CD4-positive, alpha-beta T cell (primary cell): ENCODE measurements at regions of chr14 and their contacts with region 1.

Region 1: DNA sequence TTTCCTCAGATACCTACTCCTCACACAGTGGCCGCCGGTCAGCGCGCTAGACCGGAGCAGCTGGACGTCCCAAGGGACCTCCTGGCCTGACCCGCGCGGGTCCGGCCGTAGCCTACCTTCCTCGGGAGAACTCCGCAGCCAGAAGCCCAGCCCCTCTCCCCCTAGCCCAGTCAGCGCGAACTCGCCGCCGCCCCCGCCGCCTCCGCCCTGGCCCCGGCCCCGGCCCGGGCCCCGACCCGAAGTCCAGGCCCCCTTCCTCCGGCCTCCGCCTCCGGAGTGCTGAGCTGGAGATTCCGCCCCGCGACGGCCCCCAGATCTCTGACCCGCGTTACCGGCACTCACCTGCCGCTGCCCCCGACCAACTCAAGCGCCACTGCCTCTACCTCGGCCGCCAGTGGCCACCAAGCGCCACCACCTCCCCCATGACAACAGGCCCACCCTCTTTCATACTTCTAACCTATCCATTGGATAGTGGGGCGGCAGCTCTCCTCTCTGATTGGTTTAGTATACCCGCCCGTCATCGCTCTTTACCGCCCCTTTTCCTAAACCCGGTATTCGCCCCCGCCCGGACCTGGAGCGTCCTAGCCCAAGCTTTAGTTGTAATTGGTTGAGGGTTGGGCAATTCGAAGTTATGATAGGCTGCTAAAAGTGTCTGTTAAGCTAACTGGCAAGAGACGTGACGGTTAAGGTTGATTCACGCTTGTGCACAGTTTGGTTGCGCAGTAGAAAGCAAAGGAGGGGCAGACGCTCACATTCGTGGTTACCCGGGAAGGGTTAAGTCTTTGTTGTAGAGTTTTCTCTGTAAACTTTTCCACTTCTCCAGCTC is at the start of gene NUMB:
- DNase-seq: peak; percentile 88 to 100 (median 94)
- ATAC-seq: peak; percentile 96
- H3K4me3 ChIP-seq: peak within 1 kb of the TSS; percentile 98
- H3K4me3 Mint-ChIP-seq: peak within 1 kb of the TSS; percentile 97
- H3K27ac ChIP-seq: peak within 1 kb of the TSS; percentile 23 to 37
- H3K27ac Mint-ChIP-seq: peak within 1 kb of the TSS; percentile 84
- H3K4me1 ChIP-seq: peaks cover 21% of the 10 kb centered on the region
- H3K4me1 Mint-ChIP-seq: peaks cover 45% of the 10 kb centered on the region
- H3K27me3 ChIP-seq: no peaks in the 10 kb centered on the region
- H3K27me3 Mint-ChIP-seq: no peaks in the 10 kb centered on the region
- CTCF ChIP-seq: no peak
- total RNA-seq, gene NUMB: 27.9 to 31.5 TPM

Region 2: DNA sequence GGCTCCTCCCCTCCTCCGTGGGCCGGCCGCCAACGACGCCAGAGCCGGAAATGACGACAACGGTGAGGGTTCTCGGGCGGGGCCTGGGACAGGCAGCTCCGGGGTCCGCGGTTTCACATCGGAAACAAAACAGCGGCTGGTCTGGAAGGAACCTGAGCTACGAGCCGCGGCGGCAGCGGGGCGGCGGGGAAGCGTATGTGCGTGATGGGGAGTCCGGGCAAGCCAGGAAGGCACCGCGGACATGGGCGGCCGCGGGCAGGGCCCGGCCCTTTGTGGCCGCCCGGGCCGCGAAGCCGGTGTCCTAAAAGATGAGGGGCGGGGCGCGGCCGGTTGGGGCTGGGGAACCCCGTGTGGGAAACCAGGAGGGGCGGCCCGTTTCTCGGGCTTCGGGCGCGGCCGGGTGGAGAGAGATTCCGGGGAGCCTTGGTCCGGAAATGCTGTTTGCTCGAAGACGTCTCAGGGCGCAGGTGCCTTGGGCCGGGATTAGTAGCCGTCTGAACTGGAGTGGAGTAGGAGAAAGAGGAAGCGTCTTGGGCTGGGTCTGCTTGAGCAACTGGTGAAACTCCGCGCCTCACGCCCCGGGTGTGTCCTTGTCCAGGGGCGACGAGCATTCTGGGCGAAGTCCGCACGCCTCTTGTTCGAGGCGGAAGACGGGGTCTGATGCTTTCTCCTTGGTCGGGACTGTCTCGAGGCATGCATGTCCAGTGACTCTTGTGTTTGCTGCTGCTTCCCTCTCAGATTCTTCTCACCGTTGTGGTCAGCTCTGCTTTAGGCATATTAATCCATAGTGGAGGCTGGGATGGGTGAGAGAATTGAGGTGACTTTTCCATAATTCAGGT is 321.8 kb before region 1 on chr14 and contains the start of gene PSEN1:
- CTCF ChIA-PET with region 1: no interaction called
- POLR2A ChIA-PET with region 1: interaction called, 14 read pairs
- intact Hi-C with region 1: no loop called
- DNase-seq: peak; percentile 97 to 99 (median 99)
- ATAC-seq: peak; percentile 93
- H3K4me3 ChIP-seq: peak within 1 kb of the TSS; percentile 98
- H3K4me3 Mint-ChIP-seq: peak within 1 kb of the TSS; percentile 98
- H3K27ac ChIP-seq: peak within 1 kb of the TSS; percentile 92
- H3K27ac Mint-ChIP-seq: peak within 1 kb of the TSS; percentile 99
- H3K4me1 ChIP-seq: peaks cover 23% of the 10 kb centered on the region
- H3K4me1 Mint-ChIP-seq: peaks cover 31% of the 10 kb centered on the region
- H3K27me3 ChIP-seq: no peaks in the 10 kb centered on the region
- H3K27me3 Mint-ChIP-seq: no peaks in the 10 kb centered on the region
- CTCF ChIP-seq: no peak
- total RNA-seq, gene PSEN1: 27.1 to 28.3 TPM

Region 3: GRCh38 chr14:73422515-73422914 is 35.8 kb before region 1 on chr14:
- CTCF ChIA-PET with region 1: no interaction called
- POLR2A ChIA-PET with region 1: no interaction called
- intact Hi-C with region 1: no loop called
- DNase-seq: no peak
- ATAC-seq: no peak
- H3K4me3 ChIP-seq: no peak overlapping the region
- H3K4me3 Mint-ChIP-seq: no peak overlapping the region
- H3K27ac ChIP-seq: no peak overlapping the region
- H3K27ac Mint-ChIP-seq: no peak overlapping the region
- H3K4me1 ChIP-seq: no peaks in the 10 kb centered on the region
- H3K4me1 Mint-ChIP-seq: peaks cover 20% of the 10 kb centered on the region
- H3K27me3 ChIP-seq: no peaks in the 10 kb centered on the region
- H3K27me3 Mint-ChIP-seq: no peaks in the 10 kb centered on the region
- CTCF ChIP-seq: no peak

Region 4: DNA sequence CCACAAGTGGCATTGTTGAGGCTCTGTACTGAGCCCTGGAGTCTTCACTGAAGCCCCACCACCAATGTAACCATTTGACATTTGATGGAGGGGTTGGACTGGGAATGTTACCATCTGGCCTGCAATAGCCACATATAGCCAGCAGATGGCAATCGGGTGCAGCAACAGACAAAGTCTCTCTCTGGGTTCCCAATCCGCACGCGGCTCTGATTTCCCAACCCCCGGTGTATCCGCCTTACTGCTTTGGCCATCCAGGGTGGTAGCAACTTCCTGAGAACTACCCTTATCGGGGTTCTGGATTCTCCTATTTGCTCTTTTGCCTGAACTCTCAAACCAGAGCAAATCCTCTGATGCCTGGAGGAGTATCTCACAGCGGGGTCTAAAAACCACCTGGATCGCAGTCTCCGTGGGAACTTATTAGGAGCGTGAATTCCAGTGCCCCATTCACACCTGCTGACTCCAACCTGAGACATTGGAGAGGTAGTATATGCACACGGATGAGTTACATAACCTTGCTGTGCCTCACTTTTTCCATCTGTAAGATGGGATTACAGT is 904.1 kb after region 1 on chr14:
- CTCF ChIA-PET with region 1: no interaction called
- POLR2A ChIA-PET with region 1: no interaction called
- intact Hi-C with region 1: no loop called
- DNase-seq: peak; percentile 40 to 76 (median 54)
- ATAC-seq: peak; percentile 71
- H3K4me3 ChIP-seq: no peak overlapping the region
- H3K4me3 Mint-ChIP-seq: no peak overlapping the region
- H3K27ac ChIP-seq: no peak overlapping the region
- H3K27ac Mint-ChIP-seq: no peak overlapping the region
- H3K4me1 ChIP-seq: peaks cover 6% of the 10 kb centered on the region
- H3K4me1 Mint-ChIP-seq: no peaks in the 10 kb centered on the region
- H3K27me3 ChIP-seq: peaks cover 0 to 5% of the 10 kb centered on the region in 2 experiments
- H3K27me3 Mint-ChIP-seq: peaks cover 10% of the 10 kb centered on the region
- CTCF ChIP-seq: peak; percentile 94